A673 (cell line): ENCODE measurements at regions of chr2 and their contacts with region 1.

Region 1: DNA sequence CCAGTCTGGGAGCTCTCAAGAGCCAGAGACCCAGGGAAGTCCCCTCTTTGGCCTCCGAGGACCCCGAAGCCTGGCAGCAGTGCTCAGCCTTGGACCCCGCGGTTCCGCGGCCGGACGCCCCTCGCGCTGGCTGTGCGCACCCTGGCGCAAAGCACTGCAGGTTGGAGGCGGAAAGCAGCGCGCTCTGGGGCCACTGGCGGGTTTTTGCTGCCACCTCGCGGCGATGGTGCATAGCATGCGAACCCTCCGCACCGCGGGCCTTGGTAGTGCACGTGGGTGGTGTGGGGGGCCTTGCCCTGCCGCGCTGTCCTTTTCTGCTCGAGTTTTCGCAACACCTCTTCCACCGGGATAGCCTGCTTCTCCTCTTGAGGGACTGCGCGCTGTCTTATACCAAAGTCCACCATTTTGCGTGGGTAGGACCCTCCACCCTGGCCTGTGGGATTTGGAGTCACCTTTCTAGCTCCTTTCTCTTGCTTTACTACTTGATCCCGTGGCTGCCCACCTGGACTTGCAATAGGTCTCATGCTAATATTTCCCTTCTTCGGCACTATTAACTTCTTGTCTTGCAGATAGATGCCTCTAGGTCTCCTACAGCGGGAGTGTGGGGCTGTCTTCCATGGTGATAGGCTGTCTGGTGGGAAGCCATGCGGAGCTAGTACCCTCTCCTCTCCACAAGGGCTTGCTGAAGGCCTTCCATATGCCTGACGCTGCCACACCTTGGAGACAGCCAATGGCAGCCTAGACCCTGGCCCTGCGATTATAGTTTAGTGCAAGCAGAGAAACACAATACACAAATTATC is 14.3 kb downstream of the SIX3 start:
- DNase-seq: peak; percentile 83
- H3K4me3 ChIP-seq: peak overlapping the region; percentile 33
- H3K27ac ChIP-seq: no peak overlapping the region
- H3K4me1 ChIP-seq: no peaks in the 10 kb centered on the region
- H3K27me3 ChIP-seq: peaks cover 37% of the 10 kb centered on the region
- CTCF ChIP-seq: peak; percentile 88

Region 2: GRCh38 chr2:43877782-43878464 is 1077.9 kb before region 1 on chr2:
- CTCF ChIA-PET with region 1: no interaction called
- POLR2A ChIA-PET with region 1: no interaction called
- intact Hi-C with region 1: loop called (anchors 10 kb)
- DNase-seq: peak; percentile 74
- H3K4me3 ChIP-seq: no peak overlapping the region
- H3K27ac ChIP-seq: no peak overlapping the region
- H3K4me1 ChIP-seq: peaks cover 4% of the 10 kb centered on the region
- H3K27me3 ChIP-seq: no peaks in the 10 kb centered on the region
- CTCF ChIP-seq: peak; percentile 98

Region 3: DNA sequence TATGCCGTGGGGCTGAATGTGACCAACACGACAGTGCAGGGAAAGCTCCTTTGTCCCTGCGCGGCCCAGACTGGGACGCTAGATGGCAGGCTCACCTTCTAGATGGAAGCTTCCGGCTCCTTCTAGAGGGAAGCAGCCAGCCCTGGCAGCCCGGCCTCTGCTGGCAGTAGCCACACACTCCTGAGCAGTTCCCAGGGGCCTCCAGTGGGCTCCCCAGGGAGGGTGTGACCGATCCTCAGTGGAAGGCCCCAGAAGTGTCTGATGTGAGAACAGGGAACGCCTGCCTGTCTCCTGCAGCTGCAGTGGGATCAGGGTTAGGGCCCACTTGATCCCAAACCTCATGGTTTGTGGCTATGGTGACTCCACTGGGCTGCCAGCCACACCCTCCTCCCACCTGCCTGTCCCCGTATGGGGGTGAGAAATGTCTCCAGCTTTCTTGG is 911.5 kb before region 1 on chr2:
- CTCF ChIA-PET with region 1: interaction called, 8 read pairs
- POLR2A ChIA-PET with region 1: no interaction called
- intact Hi-C with region 1: loop called (anchors 5 kb)
- DNase-seq: peak; percentile 93
- H3K4me3 ChIP-seq: no peak overlapping the region
- H3K27ac ChIP-seq: no peak overlapping the region
- H3K4me1 ChIP-seq: no peaks in the 10 kb centered on the region
- H3K27me3 ChIP-seq: no peaks in the 10 kb centered on the region
- CTCF ChIP-seq: peak; percentile 90

Region 4: DNA sequence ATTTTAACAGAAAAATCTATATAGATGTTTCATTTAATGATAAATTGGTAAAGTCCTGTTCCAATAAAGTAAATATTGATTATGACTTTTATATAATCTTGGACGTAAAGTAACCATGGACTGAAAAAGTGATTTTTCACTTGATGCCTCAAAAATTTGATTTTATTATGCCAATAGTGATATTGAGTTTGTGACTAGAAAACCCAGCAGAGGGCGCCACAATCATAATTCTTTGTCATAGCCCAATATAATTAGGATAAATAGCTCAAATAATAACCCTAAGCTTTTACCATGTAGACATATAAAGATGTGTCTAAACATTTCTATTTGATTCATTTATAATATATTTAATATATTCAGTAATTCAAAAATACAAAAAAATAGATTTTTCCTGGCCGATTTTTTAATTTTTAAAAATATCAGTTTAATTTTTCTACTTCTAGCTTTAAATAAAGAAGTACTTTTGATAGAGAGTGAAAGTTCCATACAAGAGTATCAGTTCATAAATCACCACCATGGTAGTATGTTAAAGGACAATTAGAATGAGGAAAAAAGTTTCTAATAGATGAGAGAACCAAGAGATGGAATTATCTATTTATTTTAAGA is 563.4 kb before region 1 on chr2:
- CTCF ChIA-PET with region 1: interaction called, 19 read pairs
- POLR2A ChIA-PET with region 1: no interaction called
- intact Hi-C with region 1: loop called (anchors 5 kb)
- DNase-seq: peak; percentile 63
- H3K4me3 ChIP-seq: no peak overlapping the region
- H3K27ac ChIP-seq: no peak overlapping the region
- H3K4me1 ChIP-seq: no peaks in the 10 kb centered on the region
- H3K27me3 ChIP-seq: no peaks in the 10 kb centered on the region
- CTCF ChIP-seq: peak; percentile 77